Activated naive CD4-positive, alpha-beta T cell treated with anti-CD3 and anti-CD28 coated beads for 36 hours (primary cell): ENCODE measurements at regions of chr4 and their contacts with region 1.

Region 1: DNA sequence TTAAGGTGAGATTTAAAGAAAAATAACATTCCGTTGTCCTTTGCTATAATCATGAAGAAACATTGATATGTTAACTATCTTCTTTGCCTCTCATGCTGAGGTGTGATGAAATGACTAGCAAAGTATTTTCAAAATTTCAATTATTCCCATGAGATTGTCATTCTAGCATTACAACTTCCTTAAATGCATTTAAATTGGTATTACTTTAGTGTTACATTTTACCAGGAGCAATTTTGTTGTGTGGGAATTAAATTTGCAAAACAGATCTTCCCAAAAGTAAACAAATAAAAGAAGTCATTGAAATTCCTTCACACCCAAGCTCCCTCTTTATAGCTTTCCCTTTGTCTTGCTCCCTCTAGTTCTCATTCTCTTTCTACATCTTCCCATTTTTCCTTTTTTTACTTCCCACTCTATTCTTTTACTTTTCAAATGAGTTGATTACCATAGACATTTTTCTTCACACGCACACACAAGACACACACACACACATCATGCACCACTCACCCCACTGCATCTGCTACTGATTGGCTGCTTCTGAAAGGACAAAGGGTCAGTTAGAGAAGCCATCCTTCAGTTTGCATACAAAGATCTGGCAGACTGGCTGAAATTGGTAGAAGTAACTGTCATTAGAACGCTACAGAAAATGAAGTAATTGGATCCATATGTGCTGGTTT is 10.0 kb upstream of the APELA start:
- DNase-seq: no peak
- H3K4me3 Mint-ChIP-seq: no peak overlapping the region
- H3K27ac Mint-ChIP-seq: no peak overlapping the region
- H3K4me1 Mint-ChIP-seq: no peaks in the 10 kb centered on the region
- H3K27me3 Mint-ChIP-seq: peaks cover 2% of the 10 kb centered on the region

Region 2: GRCh38 chr4:164888096-164888715 is 21.3 kb after region 1 on chr4:
- CTCF ChIA-PET with region 1: interaction called, 10 read pairs
- intact Hi-C with region 1: no loop called
- DNase-seq: no peak
- H3K4me3 Mint-ChIP-seq: no peak overlapping the region
- H3K27ac Mint-ChIP-seq: no peak overlapping the region
- H3K4me1 Mint-ChIP-seq: no peaks in the 10 kb centered on the region
- H3K27me3 Mint-ChIP-seq: peaks cover 14% of the 10 kb centered on the region